GM10248 (cell line): ENCODE measurements at regions of chr11 and their contacts with region 1.

Region 1: DNA sequence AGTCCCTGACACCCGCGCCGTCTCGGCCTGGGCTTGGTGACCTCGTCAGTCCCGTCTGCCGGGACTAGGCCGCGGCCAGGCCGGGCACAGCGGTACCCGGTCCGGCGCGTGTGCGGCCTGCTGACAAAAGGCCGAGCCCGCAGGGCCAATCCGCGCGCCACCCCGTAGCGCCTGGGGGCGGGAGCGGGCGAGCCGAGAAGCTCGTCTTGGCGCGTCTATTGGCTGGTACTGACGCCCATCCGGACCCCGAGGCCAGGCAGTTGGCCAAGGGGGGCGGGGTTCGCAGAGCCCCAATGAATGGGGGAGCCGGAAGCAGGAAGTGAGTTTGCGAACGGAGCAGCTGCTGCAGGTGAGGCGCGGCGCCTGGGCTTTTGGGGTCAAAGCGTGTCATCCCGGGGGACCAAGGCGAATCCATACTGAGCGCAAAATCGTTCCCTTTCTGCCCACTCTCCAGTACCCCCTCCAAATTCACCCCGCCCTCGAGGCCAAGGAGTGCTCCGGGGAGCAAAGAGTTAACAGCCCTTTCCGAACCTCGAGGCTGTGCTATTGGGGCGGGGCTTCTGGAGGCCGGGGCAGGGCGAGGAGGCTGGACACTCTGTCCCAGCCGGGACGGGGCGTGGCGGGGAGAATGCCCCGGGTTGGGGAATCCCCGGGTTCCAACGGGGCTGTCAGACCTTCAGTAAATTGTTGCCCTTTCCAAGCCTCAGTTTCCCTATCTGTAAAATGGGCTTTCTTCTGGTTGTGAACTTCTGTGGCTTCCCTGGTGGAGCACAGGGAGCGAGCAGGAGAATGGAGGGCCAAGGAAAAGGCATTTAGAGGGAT is at the start of gene DPP3:
- DNase-seq: peak; percentile 100
- CTCF ChIP-seq: no peak

Region 2: GRCh38 chr11:66454249-66454648 is 26.1 kb before region 1 on chr11:
- CTCF ChIA-PET with region 1: interaction called, 11 read pairs
- POLR2A ChIA-PET with region 1: interaction called, 3 read pairs
- DNase-seq: no peak
- CTCF ChIP-seq: no peak

Region 3: GRCh38 chr11:66466225-66467027 is 13.9 kb before region 1 on chr11 and contains the start of gene PELI3:
- CTCF ChIA-PET with region 1: interaction called, 83 read pairs
- POLR2A ChIA-PET with region 1: interaction called, 14 read pairs
- DNase-seq: peak; percentile 99
- CTCF ChIP-seq: no peak

Region 4: DNA sequence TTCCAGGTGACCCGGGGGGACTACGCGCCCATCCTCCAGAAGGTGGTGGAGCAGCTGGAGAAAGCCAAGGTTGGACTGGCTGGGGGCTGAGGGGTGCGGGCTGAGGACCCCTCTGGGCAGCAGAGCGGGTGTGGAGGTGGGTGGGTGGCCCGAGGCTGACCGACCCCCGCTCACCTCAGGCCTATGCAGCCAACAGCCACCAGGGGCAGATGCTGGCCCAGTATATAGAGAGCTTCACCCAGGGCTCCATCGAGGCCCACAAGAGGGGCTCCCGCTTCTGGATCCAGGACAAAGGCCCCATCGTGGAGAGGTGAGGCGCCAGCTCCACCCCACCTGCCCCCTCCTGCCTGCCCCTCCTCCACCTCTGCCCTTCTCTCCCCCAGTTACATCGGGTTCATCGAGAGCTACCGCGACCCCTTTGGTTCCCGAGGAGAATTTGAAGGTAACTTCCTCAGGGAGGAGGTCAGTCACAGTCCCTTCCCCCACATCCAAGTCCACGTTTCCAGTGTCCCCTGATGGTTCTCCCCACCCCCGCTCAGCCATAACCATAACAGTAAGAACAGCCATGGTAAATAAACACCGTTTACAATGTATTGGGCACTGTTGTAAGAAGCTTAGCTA is 11.1 kb after region 1 on chr11:
- CTCF ChIA-PET with region 1: interaction called, 19 read pairs
- POLR2A ChIA-PET with region 1: interaction called, 3 read pairs
- DNase-seq: no peak
- CTCF ChIP-seq: peak; percentile 2

Region 5: DNA sequence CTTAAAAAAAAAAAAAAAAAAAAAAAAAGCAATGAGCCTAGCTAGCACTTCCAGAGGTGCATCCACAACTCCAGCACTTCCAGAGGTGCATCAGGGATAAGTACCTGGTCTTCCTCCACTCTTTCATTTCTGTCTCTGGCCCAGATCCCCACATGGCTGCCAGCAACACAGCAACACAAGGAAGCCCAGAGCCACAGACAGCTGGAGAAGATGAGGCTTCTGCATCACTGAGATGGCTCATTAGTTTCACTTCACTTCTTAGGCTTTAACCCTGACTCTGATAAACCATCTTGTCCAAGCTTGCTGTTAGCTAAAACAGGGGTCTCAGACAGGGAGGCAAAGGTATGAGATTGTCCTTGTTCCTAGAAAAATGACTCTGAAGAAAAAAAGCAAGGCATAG is 442.2 kb after region 1 on chr11:
- CTCF ChIA-PET with region 1: no interaction called
- POLR2A ChIA-PET with region 1: no interaction called
- DNase-seq: no peak
- CTCF ChIP-seq: no peak